ENCODE measurements at regions of chrX and their contacts with region 1.

Region 1: DNA sequence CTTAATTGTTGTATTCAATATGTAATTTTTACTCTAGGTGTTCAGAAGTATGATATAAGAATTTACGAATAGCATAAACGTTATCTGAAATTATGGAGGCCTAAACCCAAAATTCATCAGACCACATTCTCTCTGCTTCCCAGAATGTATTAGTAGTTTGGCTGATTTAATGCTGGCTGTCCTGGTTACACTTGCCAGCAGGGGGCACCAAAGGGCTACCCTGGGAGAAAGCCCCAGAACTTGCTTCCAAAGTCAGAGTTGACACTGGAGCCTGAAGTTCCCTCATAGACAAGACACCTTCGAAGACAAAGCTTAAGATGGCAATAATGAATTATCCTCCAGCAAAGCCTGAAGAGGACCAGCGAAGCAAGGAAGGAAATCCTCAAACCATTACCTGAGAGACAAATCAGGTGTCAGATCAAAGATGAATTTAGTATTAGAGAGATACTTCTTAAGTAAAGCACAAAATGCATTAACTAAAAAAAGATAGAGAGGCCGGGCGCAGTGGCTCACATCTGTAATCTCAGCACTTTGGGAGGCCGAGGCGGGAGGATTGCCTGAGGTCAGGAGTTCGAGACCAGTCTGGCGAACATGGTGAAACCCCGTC is 11.3 kb upstream of the ANOS1 start:
- DNase-seq: peak; percentile 26 to 33 (median 27)
- H3K4me3 ChIP-seq: no peak overlapping the region
- H3K4me3 Mint-ChIP-seq: no peak overlapping the region
- H3K27ac ChIP-seq: no peak overlapping the region
- H3K27ac Mint-ChIP-seq: no peak overlapping the region
- H3K4me1 ChIP-seq: no peaks in the 10 kb centered on the region
- H3K4me1 Mint-ChIP-seq: no peaks in the 10 kb centered on the region
- H3K27me3 ChIP-seq: no peaks in the 10 kb centered on the region
- H3K27me3 Mint-ChIP-seq: peaks cover 8 to 15% (median 10%) of the 10 kb centered on the region in 3 donors
- CTCF ChIP-seq: peak; percentile 74

Region 2: GRCh38 chrX:7996414-7996813 is 746.8 kb before region 1 on chrX:
- intact Hi-C with region 1: loop called (anchors 5 kb)
- DNase-seq: peak; percentile 1 to 18 (median 15)
- H3K4me3 ChIP-seq: no peak overlapping the region
- H3K4me3 Mint-ChIP-seq: no peak overlapping the region
- H3K27ac ChIP-seq: no peak overlapping the region
- H3K27ac Mint-ChIP-seq: no peak overlapping the region
- H3K4me1 ChIP-seq: no peaks in the 10 kb centered on the region
- H3K4me1 Mint-ChIP-seq: peaks cover 3% of the 10 kb centered on the region
- H3K27me3 ChIP-seq: no peaks in the 10 kb centered on the region
- H3K27me3 Mint-ChIP-seq: peaks cover 0 to 6% (median 2%) of the 10 kb centered on the region in 3 donors
- CTCF ChIP-seq: peak; percentile 62